Calu3 (cell line): ENCODE measurements at regions of chr4 and their contacts with region 1.

Region 1: DNA sequence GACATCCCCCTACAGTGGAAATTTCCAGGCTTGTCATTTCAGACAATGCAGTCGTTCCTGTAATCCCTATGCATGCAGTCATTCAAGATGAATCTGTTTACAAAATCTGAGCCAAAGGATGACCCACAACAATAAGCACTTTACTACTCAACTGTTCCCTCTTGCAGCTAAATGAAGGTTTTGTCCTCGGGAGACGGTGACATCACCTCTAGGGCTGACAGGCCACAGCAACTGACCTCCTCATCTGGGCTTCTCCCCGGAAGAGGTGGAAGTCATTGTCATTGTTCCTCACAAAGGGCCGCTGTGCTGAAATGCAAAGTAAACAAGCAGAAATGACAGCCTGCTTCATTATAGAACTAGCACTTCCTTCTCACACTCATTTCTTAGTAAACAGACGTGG is 29.2 kb downstream of the CLRN2 start:
- DNase-seq: peak; percentile 35
- H3K4me3 Mint-ChIP-seq: no peak overlapping the region
- H3K27ac Mint-ChIP-seq: peak overlapping the region; percentile 52
- H3K4me1 Mint-ChIP-seq: peaks cover 14% of the 10 kb centered on the region
- H3K27me3 Mint-ChIP-seq: no peaks in the 10 kb centered on the region
- CTCF ChIP-seq: no peak

Region 2: DNA sequence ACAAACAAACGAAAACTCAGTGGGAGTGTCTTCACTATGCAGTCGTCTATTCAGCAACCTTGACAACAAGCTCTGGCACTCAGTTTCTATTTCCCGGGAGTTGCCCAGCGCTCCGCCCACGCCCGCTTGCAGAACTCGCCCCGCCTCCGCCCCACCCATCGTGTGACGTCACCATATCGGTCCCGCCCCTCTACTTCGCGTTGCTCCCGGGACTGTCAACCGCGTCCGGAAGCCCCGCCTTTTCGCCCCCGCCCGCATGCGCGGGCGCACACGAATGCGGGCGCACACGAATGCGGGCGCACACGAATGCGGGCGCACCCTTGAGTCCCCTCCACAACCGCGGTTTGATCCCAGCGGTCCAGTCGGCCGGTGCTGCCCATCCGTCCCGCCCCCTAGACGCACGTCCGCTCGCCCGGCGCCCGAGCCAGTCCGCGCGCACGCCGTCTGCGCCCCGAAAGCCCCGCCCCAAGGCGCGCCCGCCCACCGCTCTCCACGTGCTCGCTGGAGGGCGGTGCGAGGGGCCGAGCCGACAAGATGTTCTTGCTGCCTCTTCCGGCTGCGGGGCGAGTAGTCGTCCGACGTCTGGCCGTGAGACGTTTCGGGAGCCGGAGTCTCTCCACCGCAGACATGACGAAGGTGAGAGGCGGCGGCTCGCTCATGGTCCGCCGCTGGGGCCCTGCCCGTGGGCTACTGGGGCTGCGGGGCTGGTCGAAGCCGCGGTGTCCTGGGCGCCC is 32.9 kb after region 1 on chr4 and contains the start of gene LAP3:
- CTCF ChIA-PET with region 1: interaction called, 4 read pairs
- intact Hi-C with region 1: loop called (anchors 2 kb)
- DNase-seq: peak; percentile 95
- H3K4me3 Mint-ChIP-seq: peak within 1 kb of the TSS; percentile 96
- H3K27ac Mint-ChIP-seq: peak within 1 kb of the TSS; percentile 76
- H3K4me1 Mint-ChIP-seq: no peaks in the 10 kb centered on the region
- H3K27me3 Mint-ChIP-seq: no peaks in the 10 kb centered on the region
- CTCF ChIP-seq: no peak
- total RNA-seq, gene LAP3: 70.6 and 123 TPM in 2 replicates

Region 3: GRCh38 chr4:17636696-17637622 is 92.8 kb after region 1 on chr4:
- CTCF ChIA-PET with region 1: no interaction called
- intact Hi-C with region 1: loop called (anchors 2 kb)
- DNase-seq: peak; percentile 69
- H3K4me3 Mint-ChIP-seq: no peak overlapping the region
- H3K27ac Mint-ChIP-seq: no peak overlapping the region
- H3K4me1 Mint-ChIP-seq: no peaks in the 10 kb centered on the region
- H3K27me3 Mint-ChIP-seq: no peaks in the 10 kb centered on the region
- CTCF ChIP-seq: peak; percentile 77

Region 4: GRCh38 chr4:17786567-17786966 is 242.4 kb after region 1 on chr4:
- CTCF ChIA-PET with region 1: interaction called, 3 read pairs
- intact Hi-C with region 1: loop called (anchors 5 kb)
- DNase-seq: no peak
- H3K4me3 Mint-ChIP-seq: no peak overlapping the region
- H3K27ac Mint-ChIP-seq: no peak overlapping the region
- H3K4me1 Mint-ChIP-seq: no peaks in the 10 kb centered on the region
- H3K27me3 Mint-ChIP-seq: peaks cover 6% of the 10 kb centered on the region
- CTCF ChIP-seq: no peak

Region 5: DNA sequence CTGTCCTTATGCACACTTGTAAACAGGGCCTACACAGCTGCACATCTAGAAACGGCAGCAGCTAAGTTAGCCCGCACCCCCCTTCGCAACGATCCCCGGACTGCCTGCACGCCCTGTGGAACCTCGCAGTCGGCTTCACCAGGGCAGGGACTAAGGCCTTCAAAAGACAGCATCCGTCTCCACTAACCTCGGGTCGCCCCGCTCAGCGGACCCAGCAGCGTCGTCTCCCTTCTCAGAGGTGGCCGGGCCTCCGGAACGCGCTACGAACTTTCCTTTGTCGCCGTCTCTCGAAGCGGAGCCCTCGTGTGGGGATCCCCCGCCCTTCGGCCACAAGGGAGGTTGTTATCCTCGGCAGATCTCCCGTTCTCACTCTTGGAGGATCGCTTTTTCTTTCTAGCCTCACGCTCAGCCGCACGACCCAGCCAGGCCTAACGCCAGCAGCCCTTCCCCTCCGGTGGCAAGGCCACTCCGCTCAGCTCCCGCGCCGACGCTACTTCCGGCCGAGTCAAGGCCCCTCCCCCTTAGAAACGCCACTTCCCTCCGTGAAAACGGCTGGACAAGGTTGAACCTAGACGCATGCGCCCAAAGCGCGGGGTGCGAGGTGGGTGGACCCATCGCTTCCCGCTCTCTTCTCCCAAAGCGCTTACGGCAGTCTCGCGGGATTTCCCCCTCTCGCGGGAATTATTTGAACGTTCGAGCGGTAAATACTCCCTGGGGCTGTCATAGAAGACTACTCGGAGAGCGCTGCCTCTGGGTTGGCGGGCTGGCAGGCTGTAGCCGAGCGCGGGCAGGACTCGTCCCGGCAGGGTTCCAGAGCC is 266.3 kb after region 1 on chr4 and contains the starts of genes DCAF16 and NCAPG:
- CTCF ChIA-PET with region 1: interaction called, 7 read pairs
- intact Hi-C with region 1: loop called (anchors 2 kb)
- DNase-seq: peak; percentile 97
- H3K4me3 Mint-ChIP-seq: peak within 1 kb of the TSS; percentile 91
- H3K27ac Mint-ChIP-seq: peak within 1 kb of the TSS; percentile 89
- H3K4me1 Mint-ChIP-seq: peaks cover 9% of the 10 kb centered on the region
- H3K27me3 Mint-ChIP-seq: no peaks in the 10 kb centered on the region
- CTCF ChIP-seq: no peak
- total RNA-seq, gene DCAF16: 34.8 and 39.0 TPM in 2 replicates
- total RNA-seq, gene NCAPG: 26.9 and 35.3 TPM in 2 replicates

Region 6: DNA sequence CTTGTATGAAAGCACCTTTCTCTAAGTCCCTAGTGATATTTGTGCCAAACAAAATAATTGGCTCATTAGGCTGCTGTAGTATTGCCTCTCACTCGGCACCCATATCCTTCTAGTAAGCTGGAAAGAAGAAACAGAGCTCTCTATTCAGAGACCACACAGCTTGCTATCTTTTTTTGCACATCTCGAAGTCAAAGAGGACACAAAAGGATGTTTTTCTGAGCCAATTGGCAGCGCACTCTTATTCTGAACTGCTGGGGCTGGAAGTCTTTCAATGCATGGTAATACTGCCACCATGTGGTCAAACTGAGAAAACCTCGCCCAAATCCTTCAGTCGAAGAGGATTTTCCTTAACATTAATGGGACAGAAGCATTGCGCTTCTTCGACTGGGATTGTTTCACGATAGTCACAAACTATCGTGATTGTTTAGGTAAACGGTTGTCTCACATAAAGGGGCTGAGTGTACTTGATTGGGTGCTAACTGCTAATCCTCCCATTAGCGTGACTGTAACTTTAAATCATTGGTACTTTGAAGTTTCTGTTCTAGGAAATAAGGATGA is 1049.3 kb after region 1 on chr4:
- CTCF ChIA-PET with region 1: no interaction called
- intact Hi-C with region 1: loop called (anchors 10 kb)
- DNase-seq: peak; percentile 45
- H3K4me3 Mint-ChIP-seq: peak overlapping the region; percentile 55
- H3K27ac Mint-ChIP-seq: no peak overlapping the region
- H3K4me1 Mint-ChIP-seq: no peaks in the 10 kb centered on the region
- H3K27me3 Mint-ChIP-seq: peaks cover 9% of the 10 kb centered on the region
- CTCF ChIP-seq: peak; percentile 37